ENCODE measurements at regions of chr22 and their contacts with region 1.

Region 1: GRCh38 chr22:19629720-19630419 is 84.4 kb upstream of the SEPTIN5 start:
- DNase-seq: peak; percentile 16
- H3K4me3 ChIP-seq: no peak overlapping the region
- H3K27ac ChIP-seq: no peak overlapping the region
- H3K4me1 ChIP-seq: peaks cover 0 to 18% (median 0%) of the 10 kb centered on the region in 3 donors
- H3K27me3 ChIP-seq: peaks cover 0 to 26% (median 0%) of the 10 kb centered on the region in 4 donors
- CTCF ChIP-seq: peak; percentile 68 to 94 (median 89)
- POLR2A ChIP-seq: no peak

Region 2: DNA sequence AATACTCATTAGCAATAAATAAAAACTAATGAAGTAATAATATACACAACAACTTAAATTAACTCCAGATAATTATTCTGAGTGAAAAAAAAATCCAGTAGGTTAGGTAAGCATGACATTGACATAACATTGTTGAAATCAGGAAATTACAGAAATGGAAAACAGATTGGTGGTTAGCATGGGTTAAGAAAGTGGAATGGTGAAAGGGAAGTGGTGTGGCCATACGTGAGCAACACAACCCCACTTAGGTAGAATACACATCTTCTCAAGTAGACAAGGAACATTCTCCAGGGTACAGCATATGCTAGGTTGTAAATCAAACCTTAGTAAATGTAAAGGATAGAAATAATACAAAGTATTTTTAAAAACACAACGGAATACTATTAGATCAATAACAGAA is 308.1 kb before region 1 on chr22:
- intact Hi-C with region 1: no loop called
- DNase-seq: no peak
- H3K4me3 ChIP-seq: no peak overlapping the region
- H3K27ac ChIP-seq: no peak overlapping the region
- H3K4me1 ChIP-seq: no peaks in the 10 kb centered on the region
- H3K27me3 ChIP-seq: no peaks in the 10 kb centered on the region
- CTCF ChIP-seq: no peak
- POLR2A ChIP-seq: no peak

Region 3: DNA sequence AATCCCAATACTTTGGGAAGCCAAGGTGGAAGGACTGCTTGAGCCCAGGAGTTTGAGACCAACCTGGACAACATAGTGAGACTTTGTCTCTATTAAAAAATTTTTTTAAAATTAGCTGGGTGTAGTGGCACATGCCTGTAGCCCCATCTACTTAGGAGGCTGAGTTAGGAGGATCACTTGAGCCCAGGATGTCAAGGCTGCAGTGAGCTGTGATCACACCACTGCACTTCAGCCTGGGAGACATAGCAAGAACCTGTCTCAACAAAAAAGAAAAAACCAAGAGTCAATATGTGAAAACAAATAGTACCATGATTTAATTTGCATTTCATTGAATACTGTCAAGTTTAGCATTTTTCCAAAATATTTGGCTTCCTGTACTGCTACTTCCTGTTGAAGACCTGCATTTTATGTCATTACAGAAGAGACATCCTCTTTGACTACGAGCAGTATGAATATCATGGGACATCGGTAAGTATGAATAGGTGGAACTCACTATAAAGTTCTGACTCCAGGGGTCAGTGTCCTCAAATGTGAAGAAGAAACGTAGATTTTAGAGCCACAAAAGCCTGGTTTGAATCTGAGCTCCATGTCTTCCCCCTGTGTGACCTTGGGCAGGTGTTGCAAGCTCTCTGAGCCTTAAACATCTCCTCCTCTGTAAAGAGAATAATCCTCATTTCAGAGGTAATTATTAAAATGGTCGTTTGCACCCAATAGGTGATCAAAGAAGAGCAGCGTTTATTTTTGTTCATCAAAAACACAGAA is 134.1 kb before region 1 on chr22:
- intact Hi-C with region 1: loop called (anchors 10 kb)
- DNase-seq: no peak
- H3K4me3 ChIP-seq: no peak overlapping the region
- H3K27ac ChIP-seq: no peak overlapping the region
- H3K4me1 ChIP-seq: no peaks in the 10 kb centered on the region
- H3K27me3 ChIP-seq: no peaks in the 10 kb centered on the region
- CTCF ChIP-seq: peak in 4 of 6 experiments; percentile 6 to 36 (median 17)
- POLR2A ChIP-seq: no peak

Region 4: DNA sequence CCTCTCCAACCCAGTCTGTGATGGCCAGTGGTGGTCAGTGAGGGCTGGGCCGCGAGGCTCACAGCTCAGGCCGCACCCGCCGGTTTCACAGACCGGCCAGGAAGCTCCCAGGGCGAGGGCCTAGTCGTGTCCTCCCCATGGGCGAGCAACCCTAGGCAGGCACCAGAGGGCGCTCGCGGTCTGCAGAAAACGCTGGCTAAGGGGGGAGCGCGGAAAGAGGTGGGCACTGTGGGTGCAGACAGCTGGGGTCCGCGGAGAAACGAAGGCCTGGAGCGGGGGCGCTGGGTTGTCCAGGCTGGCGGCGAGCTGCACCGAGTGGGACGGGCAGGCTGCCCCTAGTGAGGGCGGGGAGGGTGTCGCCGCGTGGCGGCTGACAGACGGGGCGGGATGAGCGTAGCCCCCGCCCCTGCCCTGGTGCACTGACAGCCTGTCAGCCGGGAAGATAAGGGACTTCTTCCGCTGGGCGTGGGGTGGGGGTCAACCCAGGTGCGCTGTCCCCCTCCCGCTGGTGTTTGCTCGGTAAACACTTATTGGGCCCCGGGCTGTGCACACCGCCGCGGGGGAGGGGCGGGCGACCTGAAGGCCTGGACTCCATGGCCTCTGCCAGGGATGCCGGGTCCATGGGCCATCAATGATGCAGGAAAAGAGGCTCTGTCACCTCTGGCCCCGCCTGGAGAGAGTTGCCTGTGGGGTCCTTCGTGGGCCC is 100.9 kb after region 1 on chr22:
- intact Hi-C with region 1: no loop called
- DNase-seq: no peak
- H3K4me3 ChIP-seq: peak overlapping the region in 3 of 4 donors; percentile 40 to 65 (median 42)
- H3K27ac ChIP-seq: no peak overlapping the region
- H3K4me1 ChIP-seq: peaks cover 6 to 12% (median 11%) of the 10 kb centered on the region in 3 donors
- H3K27me3 ChIP-seq: peaks cover 0 to 45% (median 0%) of the 10 kb centered on the region in 4 donors
- CTCF ChIP-seq: peak; percentile 71 to 97 (median 95)
- POLR2A ChIP-seq: no peak

Measured in esophagus squamous epithelium (tissue), 5 donors.